ENCODE measurements at regions of chr7 and their contacts with region 1.

Region 1: GRCh38 chr7:102279537-102280400 is 6.9 kb upstream of the SH2B2 start:
- DNase-seq: peak in 4 of 7 donors; percentile 41 to 56 (median 46)
- H3K4me3 ChIP-seq: no peak overlapping the region
- H3K27ac ChIP-seq: no peak overlapping the region
- H3K4me1 ChIP-seq: peaks cover 0 to 5% of the 10 kb centered on the region in 2 donors
- H3K27me3 ChIP-seq: no peaks in the 10 kb centered on the region
- CTCF ChIP-seq: peak; percentile 57 to 89 (median 77)
- POLR2A ChIP-seq: no peak

Region 2: DNA sequence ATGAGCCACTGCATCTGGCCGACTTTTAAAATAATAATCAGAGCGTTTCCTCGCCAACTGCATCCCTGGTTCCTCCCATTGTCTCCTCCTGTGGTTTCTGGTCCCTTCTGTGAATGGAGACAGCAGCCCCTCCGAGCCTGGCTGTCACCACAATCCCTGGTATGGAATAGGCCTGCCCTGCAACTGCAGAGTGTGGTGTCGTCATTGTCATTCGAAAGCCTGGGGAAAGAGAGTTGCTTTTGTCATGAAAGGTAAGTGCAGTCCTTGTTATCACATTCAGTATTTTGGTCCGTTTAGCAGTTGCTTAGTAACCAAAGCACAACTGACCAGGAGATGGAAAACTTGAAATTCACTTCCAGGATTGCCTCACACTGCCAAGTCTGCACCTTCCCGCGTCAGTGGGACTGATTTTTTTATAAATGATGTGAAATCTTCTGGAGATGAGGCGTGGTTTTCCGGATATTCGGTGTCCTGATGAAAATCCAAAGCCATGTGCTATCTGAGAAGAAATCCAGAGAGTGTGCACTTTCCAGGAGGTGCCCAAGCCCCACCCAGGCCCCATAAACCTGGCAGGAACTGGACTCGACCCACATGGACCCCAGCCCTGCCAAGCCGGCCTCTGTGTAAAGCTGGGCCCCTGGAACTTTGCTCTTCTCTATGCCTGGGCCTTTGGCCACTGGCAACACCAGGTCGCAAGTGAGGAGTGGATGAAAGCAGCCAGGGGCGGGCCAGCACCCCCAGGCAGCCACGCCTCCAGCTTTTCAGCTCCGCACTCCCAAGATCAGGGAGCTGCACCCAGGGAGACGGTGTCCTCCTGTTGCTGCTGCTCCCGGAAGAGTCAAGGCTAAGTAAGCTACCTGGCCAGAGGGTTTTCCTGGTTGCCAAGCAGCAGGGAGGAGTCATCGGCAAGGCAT is 126.8 kb before region 1 on chr7:
- intact Hi-C with region 1: no loop called
- DNase-seq: peak in 1 of 7 donors; percentile 55
- H3K4me3 ChIP-seq: no peak overlapping the region
- H3K27ac ChIP-seq: no peak overlapping the region
- H3K4me1 ChIP-seq: peaks cover 8 to 13% of the 10 kb centered on the region in 2 donors
- H3K27me3 ChIP-seq: no peaks in the 10 kb centered on the region
- CTCF ChIP-seq: no peak
- POLR2A ChIP-seq: no peak

Region 3: DNA sequence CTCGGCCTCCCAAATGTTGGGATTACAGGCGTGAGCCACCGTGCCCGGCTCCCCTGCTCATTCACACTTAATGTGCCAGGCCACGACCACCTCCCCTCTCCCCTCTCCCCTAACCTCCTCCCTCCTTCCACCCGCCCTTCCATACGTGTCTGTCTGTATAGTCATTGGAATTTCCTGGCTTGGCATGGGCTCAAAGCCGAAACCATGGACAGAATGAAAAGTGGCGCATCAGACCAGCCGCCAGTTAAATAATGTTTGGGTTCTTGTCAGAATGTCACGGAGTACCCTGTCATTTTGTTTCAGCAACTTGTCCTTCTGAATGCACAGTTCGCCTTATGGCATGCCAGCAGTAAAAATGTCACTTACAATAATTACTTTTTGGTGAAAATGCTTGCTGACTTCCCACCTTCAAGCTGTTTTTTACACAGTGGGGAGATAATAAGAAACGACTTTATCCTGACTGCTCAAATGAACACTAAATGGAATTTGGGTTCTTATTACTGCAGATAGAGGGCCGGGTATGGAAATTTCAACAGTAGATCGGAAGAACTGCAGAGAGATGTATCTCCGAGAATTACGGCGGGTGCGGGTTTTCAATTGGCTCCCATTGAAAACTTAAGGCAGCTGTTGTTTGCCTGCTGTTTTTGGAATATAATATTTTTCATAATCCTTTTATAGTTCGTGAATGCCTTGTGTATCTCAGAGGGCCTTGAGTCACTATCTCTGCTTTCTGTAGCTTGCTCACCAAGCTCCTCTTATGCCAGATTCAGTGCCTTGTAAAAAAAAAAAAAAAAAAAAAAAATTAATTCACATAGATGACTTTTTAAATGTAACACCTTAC is 58.6 kb before region 1 on chr7:
- intact Hi-C with region 1: no loop called
- DNase-seq: no peak
- H3K4me3 ChIP-seq: no peak overlapping the region
- H3K27ac ChIP-seq: no peak overlapping the region
- H3K4me1 ChIP-seq: peaks cover 3 to 8% of the 10 kb centered on the region in 2 donors
- H3K27me3 ChIP-seq: no peaks in the 10 kb centered on the region
- CTCF ChIP-seq: no peak
- POLR2A ChIP-seq: no peak

Region 4: GRCh38 chr7:102390697-102391484 is 111.1 kb after region 1 on chr7:
- intact Hi-C with region 1: loop called (anchors 2 kb)
- DNase-seq: peak; percentile 83 to 95 (median 88)
- H3K4me3 ChIP-seq: no peak overlapping the region
- H3K27ac ChIP-seq: no peak overlapping the region
- H3K4me1 ChIP-seq: peaks cover 0 to 5% of the 10 kb centered on the region in 2 donors
- H3K27me3 ChIP-seq: no peaks in the 10 kb centered on the region
- CTCF ChIP-seq: peak; percentile 92 to 96 (median 95)
- POLR2A ChIP-seq: no peak